Activated T-helper 2 cell treated with anti-CD3 and anti-CD28 coated beads, Interferon-gamma antibody, Interleukin-2, Interleukin-4, amounts not matched to agents 10 μg/mL and 5 μg/mL and 100 μg/mL, durations not matched to agents 14 hours and 24 hours and 36 hours (primary cell): ENCODE measurements at regions of chr12 and their contacts with region 1.

Region 1: DNA sequence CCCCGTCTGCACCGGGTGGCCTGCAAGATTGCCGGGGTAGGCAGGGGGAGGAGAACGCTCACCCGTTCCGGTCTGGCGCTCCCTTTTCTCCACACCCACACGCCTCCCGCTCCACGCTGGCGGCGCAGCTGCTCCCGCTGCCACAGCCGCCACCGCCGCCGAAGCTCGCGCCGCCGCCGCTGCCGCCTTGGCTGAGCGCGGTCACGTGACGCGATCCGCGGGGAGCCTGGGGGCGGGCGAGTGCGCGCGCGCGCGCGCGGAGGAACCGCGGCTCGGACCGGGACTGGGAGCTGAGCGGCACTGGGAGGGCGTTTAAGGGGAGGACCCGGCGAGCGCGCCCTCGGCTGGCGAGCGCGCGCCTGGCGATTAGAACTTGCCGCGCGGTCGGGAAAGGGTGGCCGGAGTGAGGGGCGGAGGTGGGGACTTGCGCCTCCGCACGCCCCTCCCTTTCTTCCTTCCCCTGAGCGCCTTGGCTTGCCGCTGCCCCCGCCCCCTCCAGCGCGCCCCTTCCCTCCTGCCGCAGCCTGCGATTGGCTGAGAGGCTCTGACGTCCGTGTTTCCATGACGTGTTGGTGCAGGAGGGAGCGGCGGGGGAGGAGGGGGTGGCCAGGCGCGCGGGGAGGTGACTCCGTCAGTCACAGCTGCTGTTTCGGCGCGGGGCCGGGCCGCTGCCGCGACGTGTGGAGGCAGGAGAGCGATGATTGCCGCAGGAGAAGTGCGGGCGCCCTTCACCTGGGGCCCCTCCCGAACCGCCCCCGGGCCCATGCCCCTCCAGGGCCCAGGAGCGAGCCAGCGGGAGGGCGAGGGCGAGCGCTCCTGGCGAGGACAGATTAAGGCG is 738 bp upstream of the ATP2B1 start:
- DNase-seq: peak; percentile 97
- H3K4me3 Mint-ChIP-seq: peak overlapping the region; percentile 82
- H3K27ac Mint-ChIP-seq: peak overlapping the region; percentile 83
- H3K4me1 Mint-ChIP-seq: peaks cover 35% of the 10 kb centered on the region
- H3K27me3 Mint-ChIP-seq: peaks cover 47% of the 10 kb centered on the region

Region 2: GRCh38 chr12:89019408-89020120 is 689.8 kb before region 1 on chr12:
- intact Hi-C with region 1: loop called (anchors 5 kb)
- DNase-seq: peak; percentile 75
- H3K4me3 Mint-ChIP-seq: no peak overlapping the region
- H3K27ac Mint-ChIP-seq: no peak overlapping the region
- H3K4me1 Mint-ChIP-seq: peaks cover 27% of the 10 kb centered on the region
- H3K27me3 Mint-ChIP-seq: peaks cover 1% of the 10 kb centered on the region

Region 3: DNA sequence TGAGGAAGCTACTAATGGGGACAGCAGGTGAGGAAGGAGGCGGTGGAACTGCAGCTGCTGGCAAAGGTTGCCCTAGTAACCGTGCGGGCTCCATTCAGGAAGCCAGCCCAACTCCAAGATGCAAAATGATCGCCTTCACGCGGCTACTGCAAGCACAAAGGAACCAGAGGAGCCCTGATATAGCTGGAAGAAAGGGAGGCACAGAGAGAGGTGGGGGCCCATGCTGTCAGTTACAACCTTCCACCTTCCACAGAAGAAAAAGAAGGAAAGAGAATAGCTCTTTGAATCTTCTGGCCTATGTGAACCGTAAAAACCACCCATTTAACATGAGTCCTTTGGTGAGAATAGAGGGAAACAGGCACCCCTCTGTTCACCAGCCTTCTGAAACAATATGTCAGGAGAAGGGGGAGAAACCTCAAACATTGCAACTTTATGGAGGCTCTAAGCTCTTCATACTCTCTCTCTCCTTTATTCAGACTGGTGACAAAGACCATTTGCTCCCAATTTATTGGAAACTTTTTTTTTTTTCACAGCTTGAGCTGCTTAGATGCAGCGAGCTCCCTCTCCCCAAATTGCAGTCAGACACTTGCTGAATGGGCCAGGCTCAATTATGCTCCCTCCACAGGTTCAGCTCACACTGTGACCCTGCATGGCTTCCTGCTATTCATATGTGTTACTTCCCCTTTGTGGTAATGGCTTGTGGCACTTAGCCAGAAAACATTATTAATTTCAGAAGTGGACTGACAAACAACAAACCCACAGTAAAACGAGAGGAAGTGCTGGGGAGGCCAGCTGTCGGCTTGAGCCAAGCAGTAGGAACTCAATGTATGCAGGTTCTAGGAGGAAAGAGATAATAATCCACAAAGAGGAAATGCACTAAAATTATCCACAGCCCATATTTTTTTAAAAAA is 363.3 kb before region 1 on chr12:
- intact Hi-C with region 1: no loop called
- DNase-seq: peak; percentile 55
- H3K4me3 Mint-ChIP-seq: peak overlapping the region; percentile 97
- H3K27ac Mint-ChIP-seq: peak overlapping the region; percentile 92
- H3K4me1 Mint-ChIP-seq: peaks cover 70% of the 10 kb centered on the region
- H3K27me3 Mint-ChIP-seq: no peaks in the 10 kb centered on the region

Region 4: GRCh38 chr12:89542912-89543592 is 166.3 kb before region 1 on chr12:
- intact Hi-C with region 1: loop called (anchors 5 kb)
- DNase-seq: peak; percentile 35
- H3K4me3 Mint-ChIP-seq: no peak overlapping the region
- H3K27ac Mint-ChIP-seq: no peak overlapping the region
- H3K4me1 Mint-ChIP-seq: peaks cover 9% of the 10 kb centered on the region
- H3K27me3 Mint-ChIP-seq: no peaks in the 10 kb centered on the region

Region 5: DNA sequence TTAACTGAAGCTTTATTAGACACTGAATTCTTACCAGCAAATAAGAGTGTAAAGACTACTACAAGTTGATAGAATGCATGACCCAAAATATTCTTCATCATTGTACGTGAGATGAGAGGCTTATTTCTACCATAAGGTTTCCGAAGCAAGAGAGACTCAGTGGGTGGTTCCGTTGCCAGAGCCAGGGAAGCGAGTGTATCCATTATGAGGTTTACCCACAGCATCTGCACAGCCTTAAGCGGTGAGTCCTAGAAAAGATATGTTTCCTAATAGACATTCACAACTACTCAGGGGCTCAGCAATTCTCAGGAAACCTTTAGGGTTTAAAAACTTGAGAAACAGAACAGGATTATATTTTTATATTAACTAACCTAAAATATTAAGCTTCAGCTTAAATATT is 105.7 kb before region 1 on chr12:
- intact Hi-C with region 1: no loop called
- DNase-seq: no peak
- H3K4me3 Mint-ChIP-seq: no peak overlapping the region
- H3K27ac Mint-ChIP-seq: no peak overlapping the region
- H3K4me1 Mint-ChIP-seq: peaks cover 2% of the 10 kb centered on the region
- H3K27me3 Mint-ChIP-seq: peaks cover 3% of the 10 kb centered on the region

Region 6: GRCh38 chr12:89663577-89664357 is 45.6 kb before region 1 on chr12:
- intact Hi-C with region 1: loop called (anchors 5 kb)
- DNase-seq: no peak
- H3K4me3 Mint-ChIP-seq: peak overlapping the region; percentile 9
- H3K27ac Mint-ChIP-seq: peak overlapping the region; percentile 10
- H3K4me1 Mint-ChIP-seq: peaks cover 26% of the 10 kb centered on the region
- H3K27me3 Mint-ChIP-seq: no peaks in the 10 kb centered on the region

Region 7: GRCh38 chr12:89856431-89856830 is 147.1 kb after region 1 on chr12:
- intact Hi-C with region 1: loop called (anchors 2 kb)
- DNase-seq: no peak
- H3K4me3 Mint-ChIP-seq: no peak overlapping the region
- H3K27ac Mint-ChIP-seq: no peak overlapping the region
- H3K4me1 Mint-ChIP-seq: peaks cover 33% of the 10 kb centered on the region
- H3K27me3 Mint-ChIP-seq: no peaks in the 10 kb centered on the region